Right ventricle myocardium inferior (tissue), 1 donor: ENCODE measurements at regions of chr4 and their contacts with region 1.

Region 1: DNA sequence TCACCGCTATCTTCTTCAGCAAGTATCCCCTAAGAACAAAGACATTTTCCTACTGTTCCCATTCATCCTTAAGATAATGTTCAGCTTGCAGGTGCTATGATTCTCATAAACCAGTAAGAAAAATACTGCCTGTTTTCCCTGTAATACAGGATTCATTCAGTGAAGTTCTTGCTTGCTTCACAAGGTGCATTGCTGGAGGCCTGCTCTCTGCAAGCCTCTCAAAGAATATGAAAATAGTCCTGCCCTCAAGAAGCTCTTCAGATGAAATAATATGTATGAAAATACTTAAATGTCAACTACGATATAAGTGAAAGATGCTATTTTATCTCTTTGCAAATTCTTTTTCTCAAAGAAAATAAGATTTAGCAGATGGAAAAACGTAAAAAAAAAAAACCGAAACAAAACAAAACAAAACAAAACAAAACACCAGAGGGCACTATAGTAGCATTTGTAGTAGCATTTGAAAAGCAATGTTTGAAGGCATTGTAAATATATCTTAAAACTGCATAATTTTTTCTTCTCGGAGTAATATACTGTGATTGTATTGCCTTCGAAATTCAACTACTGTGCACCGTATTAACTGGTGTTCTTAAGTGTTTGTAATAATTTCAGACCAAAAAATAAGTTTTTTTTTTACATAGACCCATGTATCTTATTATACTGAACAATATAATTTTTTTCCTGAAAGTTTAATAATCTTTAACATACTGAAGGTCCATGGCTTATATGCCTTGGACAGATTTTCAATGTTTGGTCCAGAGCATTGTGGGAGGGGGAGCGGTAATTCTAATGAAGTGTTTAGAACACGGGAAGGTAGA is 26.0 kb downstream of the ADH4 start:
- DNase-seq: no peak
- ATAC-seq: no peak

Region 2: DNA sequence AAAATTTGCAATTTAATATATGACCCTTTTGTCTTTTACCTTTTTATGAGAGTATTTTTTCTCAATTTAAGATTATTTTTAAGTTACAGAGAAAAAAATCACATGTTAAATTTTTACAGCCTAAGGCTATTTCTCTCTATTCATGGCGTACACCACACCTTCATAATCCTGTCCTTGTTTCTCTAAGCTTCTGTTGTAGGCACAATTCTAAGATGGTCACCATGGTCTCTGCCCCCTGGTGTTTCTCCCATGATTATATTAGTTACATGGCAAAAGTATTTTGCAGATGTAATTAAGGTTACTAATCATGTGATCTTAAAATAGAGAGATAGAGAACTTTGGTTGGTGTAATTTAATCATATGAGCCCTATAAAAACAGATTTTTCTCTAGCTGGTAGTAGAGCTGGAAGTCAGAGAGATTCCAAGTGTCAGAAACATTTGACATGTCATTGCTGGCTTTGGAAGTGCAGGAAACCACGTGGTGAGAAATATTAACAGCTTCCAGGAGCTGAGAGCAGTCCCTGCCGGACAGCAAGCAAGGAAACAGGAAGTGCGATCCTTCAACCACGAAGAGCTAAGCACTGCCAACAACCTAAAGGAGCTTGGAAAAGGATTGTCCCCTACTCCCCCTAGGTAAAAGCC is 279.0 kb before region 1 on chr4:
- intact Hi-C with region 1: no loop called
- DNase-seq: no peak
- ATAC-seq: peak; percentile 84

Region 3: GRCh38 chr4:99180382-99181070 is 62.4 kb after region 1 on chr4:
- intact Hi-C with region 1: no loop called
- DNase-seq: no peak
- ATAC-seq: peak; percentile 62

Region 4: GRCh38 chr4:99462875-99463464 is 344.9 kb after region 1 on chr4:
- intact Hi-C with region 1: loop called (anchors 5 kb)
- DNase-seq: no peak
- ATAC-seq: peak; percentile 75